ENCODE measurements at regions of chr4 and their contacts with region 1.

Region 1: GRCh38 chr4:122542411-122543236 is 78.2 kb downstream of the IL21 start:
- DNase-seq: no peak
- H3K4me3 Mint-ChIP-seq: no peak overlapping the region
- H3K27ac Mint-ChIP-seq: peak overlapping the region; percentile 81
- H3K4me1 Mint-ChIP-seq: peaks cover 60% of the 10 kb centered on the region
- H3K27me3 Mint-ChIP-seq: no peaks in the 10 kb centered on the region

Region 2: DNA sequence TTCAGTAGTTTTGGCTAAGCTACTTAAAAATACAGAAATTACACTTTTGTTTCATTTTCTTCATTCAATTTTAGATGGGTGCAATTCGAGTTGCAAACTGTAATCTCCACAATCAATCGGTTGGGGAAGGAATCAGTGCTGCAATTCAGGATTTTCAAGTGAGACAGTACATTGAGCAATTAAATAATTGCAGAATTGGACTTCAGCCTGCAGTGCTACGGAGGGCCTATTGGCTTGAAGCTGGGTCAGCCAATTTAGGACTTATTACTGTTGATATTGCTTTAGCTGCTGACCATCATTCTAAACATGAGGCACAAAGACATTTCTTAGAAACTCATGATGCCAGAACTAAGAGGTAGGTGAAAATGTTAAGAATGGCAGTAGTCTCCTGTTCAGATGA is 312.8 kb before region 1 on chr4:
- CTCF ChIA-PET with region 1: no interaction called
- POLR2A ChIA-PET with region 1: no interaction called
- DNase-seq: no peak
- H3K4me3 Mint-ChIP-seq: no peak overlapping the region
- H3K27ac Mint-ChIP-seq: no peak overlapping the region
- H3K4me1 Mint-ChIP-seq: peaks cover 3% of the 10 kb centered on the region
- H3K27me3 Mint-ChIP-seq: no peaks in the 10 kb centered on the region

Region 3: DNA sequence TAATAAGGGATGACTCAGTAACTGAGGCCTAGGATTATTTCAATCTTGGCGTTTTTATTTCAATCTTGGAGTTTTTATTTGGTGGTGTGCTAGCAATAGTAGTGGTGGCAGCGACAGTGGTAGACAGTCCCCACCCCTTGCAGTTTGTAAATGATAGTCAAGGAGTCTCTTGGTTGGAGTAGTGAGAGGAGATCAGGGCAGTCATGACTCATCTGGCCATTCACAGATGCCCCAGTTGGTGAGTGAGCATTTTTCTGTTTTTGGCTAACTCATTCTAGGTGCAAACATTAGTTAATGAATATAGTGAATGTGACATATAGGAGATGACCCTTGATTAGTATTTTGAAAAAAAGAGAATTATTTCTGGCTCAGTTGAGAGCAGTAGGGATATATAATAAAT is 257.3 kb before region 1 on chr4:
- CTCF ChIA-PET with region 1: no interaction called
- POLR2A ChIA-PET with region 1: interaction called, 13 read pairs
- DNase-seq: no peak
- H3K4me3 Mint-ChIP-seq: no peak overlapping the region
- H3K27ac Mint-ChIP-seq: no peak overlapping the region
- H3K4me1 Mint-ChIP-seq: no peaks in the 10 kb centered on the region
- H3K27me3 Mint-ChIP-seq: no peaks in the 10 kb centered on the region

Region 4: DNA sequence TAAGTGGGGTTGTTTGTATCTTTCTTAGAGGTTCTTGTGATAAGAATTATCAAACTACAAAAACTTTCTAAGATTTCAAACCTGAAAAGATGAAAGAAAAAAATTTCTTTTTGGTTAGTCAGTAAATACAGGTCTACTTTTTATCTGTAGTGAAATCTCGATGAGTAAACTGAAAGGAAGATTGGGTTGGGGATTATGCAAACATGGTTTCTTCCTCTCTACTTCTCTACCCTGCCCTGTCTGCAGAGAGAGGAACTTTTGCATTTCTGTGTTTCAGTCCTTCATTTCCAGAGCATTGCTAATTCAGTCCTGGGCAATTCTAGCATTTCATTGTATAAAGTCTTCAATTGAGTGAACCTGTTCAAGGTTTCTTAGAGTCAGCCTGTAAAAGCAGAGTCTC is 34.5 kb before region 1 on chr4:
- CTCF ChIA-PET with region 1: no interaction called
- POLR2A ChIA-PET with region 1: no interaction called
- DNase-seq: no peak
- H3K4me3 Mint-ChIP-seq: peak overlapping the region; percentile 61
- H3K27ac Mint-ChIP-seq: peak overlapping the region; percentile 65
- H3K4me1 Mint-ChIP-seq: peaks cover 38% of the 10 kb centered on the region
- H3K27me3 Mint-ChIP-seq: no peaks in the 10 kb centered on the region

Region 5: GRCh38 chr4:122524176-122524575 is 18.4 kb before region 1 on chr4:
- CTCF ChIA-PET with region 1: no interaction called
- POLR2A ChIA-PET with region 1: no interaction called
- DNase-seq: no peak
- H3K4me3 Mint-ChIP-seq: no peak overlapping the region
- H3K27ac Mint-ChIP-seq: no peak overlapping the region
- H3K4me1 Mint-ChIP-seq: no peaks in the 10 kb centered on the region
- H3K27me3 Mint-ChIP-seq: peaks cover 2% of the 10 kb centered on the region